Caco-2 (cell line): ENCODE measurements at regions of chr7 and their contacts with region 1.

Region 1: DNA sequence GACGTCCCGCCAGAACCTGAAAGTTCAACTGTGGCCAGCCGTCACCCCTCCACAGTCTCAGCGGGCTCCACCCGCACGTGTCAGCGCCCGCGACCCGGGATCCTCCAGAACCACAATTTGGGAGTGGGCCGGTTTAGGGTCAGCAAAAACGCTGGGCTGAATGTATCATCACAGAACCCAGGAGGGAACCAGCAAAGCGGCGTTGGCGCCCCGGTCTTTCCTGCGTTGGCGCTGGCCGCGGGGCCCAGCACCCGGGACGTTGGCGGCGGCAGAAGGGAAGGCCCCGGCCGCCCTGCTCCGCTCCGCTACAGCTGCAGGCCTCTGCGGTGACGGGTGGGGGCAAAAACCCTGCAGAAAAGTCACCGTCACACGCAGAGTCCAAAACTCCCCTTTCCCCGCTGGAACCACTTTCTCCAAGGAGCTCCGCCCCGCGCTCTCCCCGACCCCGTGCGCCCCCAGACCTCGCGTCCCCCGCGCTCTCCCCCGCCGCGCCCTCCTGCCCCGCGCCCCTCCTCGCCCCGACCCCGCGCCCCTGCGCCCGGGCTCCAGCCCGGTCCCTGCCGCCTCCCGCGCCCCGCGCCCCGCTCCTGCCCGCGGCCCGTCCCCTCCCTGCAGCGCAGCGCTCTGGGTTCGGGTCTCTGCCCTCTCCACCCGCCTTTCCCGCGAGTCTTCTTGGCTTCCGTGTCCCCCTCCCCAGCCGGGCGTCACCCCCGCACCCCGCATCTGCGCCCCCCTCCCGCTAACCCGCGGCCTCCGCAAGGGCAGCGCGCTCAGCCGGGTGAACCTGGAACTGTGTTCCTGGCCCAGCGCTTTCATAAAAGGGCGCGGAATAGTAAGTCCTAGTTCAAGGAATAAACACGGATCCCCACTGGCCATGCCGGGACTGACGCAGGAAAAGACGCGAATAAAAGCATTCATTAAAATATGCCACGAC is 24.0 kb upstream of the RNF32 start:
- DNase-seq: peak in 1 of 2 experiments; percentile 30
- H3K4me3 ChIP-seq: peak overlapping the region; percentile 45
- H3K4me3 Mint-ChIP-seq: peak overlapping the region; percentile 75
- H3K27ac Mint-ChIP-seq: peak overlapping the region; percentile 79
- H3K4me1 ChIP-seq: peaks cover 74% of the 10 kb centered on the region
- H3K4me1 Mint-ChIP-seq: peaks cover 58% of the 10 kb centered on the region
- H3K27me3 ChIP-seq: no peaks in the 10 kb centered on the region
- H3K27me3 Mint-ChIP-seq: no peaks in the 10 kb centered on the region
- CTCF ChIP-seq: no peak

Region 2: DNA sequence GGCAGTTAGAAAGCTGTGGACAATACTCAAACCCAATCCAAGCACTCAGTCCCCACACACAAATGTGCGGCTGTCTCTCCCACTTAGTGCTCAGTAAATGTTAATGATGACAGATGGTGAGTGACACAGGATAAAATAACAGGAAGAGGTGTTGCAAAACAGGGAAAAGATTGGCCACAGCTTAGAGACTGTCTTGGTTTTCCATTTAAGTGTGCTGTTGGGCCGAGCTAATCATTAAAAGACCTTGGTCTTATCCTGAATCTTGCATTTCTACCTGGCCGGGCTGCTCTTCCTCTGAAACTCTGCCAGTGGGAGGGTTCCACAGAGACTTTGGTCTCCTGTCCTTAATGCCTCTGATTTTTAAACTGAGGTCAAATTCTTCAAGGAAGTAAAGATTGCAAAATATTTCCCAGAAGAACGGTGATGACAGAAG is 89.1 kb before region 1 on chr7:
- CTCF ChIA-PET with region 1: no interaction called
- POLR2A ChIA-PET with region 1: interaction called, 3 read pairs
- intact Hi-C with region 1: loop called (anchors 1 kb)
- DNase-seq: peak; percentile 68 to 82
- H3K4me3 ChIP-seq: no peak overlapping the region
- H3K4me3 Mint-ChIP-seq: no peak overlapping the region
- H3K27ac Mint-ChIP-seq: peak overlapping the region; percentile 45
- H3K4me1 ChIP-seq: peaks cover 39% of the 10 kb centered on the region
- H3K4me1 Mint-ChIP-seq: peaks cover 18% of the 10 kb centered on the region
- H3K27me3 ChIP-seq: no peaks in the 10 kb centered on the region
- H3K27me3 Mint-ChIP-seq: no peaks in the 10 kb centered on the region
- CTCF ChIP-seq: no peak

Region 3: GRCh38 chr7:156560075-156560474 is 56.5 kb before region 1 on chr7:
- CTCF ChIA-PET with region 1: interaction called, 3 read pairs
- POLR2A ChIA-PET with region 1: interaction called, 5 read pairs
- intact Hi-C with region 1: loop called (anchors 1 kb)
- DNase-seq: peak; percentile 40 to 44
- H3K4me3 ChIP-seq: no peak overlapping the region
- H3K4me3 Mint-ChIP-seq: no peak overlapping the region
- H3K27ac Mint-ChIP-seq: no peak overlapping the region
- H3K4me1 ChIP-seq: no peaks in the 10 kb centered on the region
- H3K4me1 Mint-ChIP-seq: no peaks in the 10 kb centered on the region
- H3K27me3 ChIP-seq: no peaks in the 10 kb centered on the region
- H3K27me3 Mint-ChIP-seq: no peaks in the 10 kb centered on the region
- CTCF ChIP-seq: peak; percentile 52 to 59

Region 4: GRCh38 chr7:156640257-156640948 is 23.9 kb after region 1 on chr7 and contains the start of gene RNF32:
- CTCF ChIA-PET with region 1: no interaction called
- POLR2A ChIA-PET with region 1: interaction called, 22 read pairs
- intact Hi-C with region 1: loop called (anchors 1 kb)
- DNase-seq: peak; percentile 99
- H3K4me3 ChIP-seq: peak within 1 kb of the TSS; percentile 72
- H3K4me3 Mint-ChIP-seq: peak within 1 kb of the TSS; percentile 99
- H3K27ac Mint-ChIP-seq: peak within 1 kb of the TSS; percentile 100
- H3K4me1 ChIP-seq: peaks cover 19% of the 10 kb centered on the region
- H3K4me1 Mint-ChIP-seq: peaks cover 29% of the 10 kb centered on the region
- H3K27me3 ChIP-seq: no peaks in the 10 kb centered on the region
- H3K27me3 Mint-ChIP-seq: no peaks in the 10 kb centered on the region
- CTCF ChIP-seq: no peak
- total RNA-seq, gene RNF32: 24.1 and 26.0 TPM in 2 replicates

Region 5: GRCh38 chr7:156747691-156748090 is 131.2 kb after region 1 on chr7:
- CTCF ChIA-PET with region 1: no interaction called
- POLR2A ChIA-PET with region 1: no interaction called
- intact Hi-C with region 1: no loop called
- DNase-seq: peak in 1 of 2 experiments; percentile 35
- H3K4me3 ChIP-seq: no peak overlapping the region
- H3K4me3 Mint-ChIP-seq: no peak overlapping the region
- H3K27ac Mint-ChIP-seq: no peak overlapping the region
- H3K4me1 ChIP-seq: peaks cover 45% of the 10 kb centered on the region
- H3K4me1 Mint-ChIP-seq: peaks cover 12% of the 10 kb centered on the region
- H3K27me3 ChIP-seq: no peaks in the 10 kb centered on the region
- H3K27me3 Mint-ChIP-seq: no peaks in the 10 kb centered on the region
- CTCF ChIP-seq: no peak

Region 6: DNA sequence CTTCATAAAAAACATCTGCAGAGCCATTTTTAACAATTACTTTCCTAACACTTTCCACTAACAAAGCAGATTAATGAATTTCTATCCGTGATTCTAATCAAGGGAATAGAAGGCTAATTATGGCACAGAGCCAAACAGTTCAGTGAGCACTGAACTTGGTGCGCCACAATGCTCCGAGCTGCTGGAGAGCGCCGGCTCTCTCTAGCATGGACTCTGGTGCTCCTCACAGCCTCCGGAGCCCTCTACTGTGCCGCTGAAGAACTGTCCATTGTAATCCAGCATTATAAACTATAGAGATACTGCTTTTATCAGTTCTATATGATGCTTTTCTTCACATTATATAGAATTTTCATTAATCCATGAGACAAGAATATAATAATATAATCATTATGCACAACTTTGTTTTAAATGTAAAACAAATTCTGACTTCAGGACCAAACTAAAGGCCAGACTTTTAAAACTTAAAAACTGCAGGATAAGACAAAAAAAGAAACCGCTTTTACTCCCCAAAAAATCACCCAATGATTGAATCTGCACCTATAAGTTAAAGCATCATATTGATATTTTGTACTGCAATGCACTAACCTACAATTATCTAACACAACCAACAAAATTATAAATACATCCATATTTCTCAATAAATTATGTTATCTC is 147.6 kb after region 1 on chr7:
- CTCF ChIA-PET with region 1: interaction called, 3 read pairs
- POLR2A ChIA-PET with region 1: no interaction called
- intact Hi-C with region 1: loop called (anchors 1 kb)
- DNase-seq: peak; percentile 73 to 78
- H3K4me3 ChIP-seq: no peak overlapping the region
- H3K4me3 Mint-ChIP-seq: no peak overlapping the region
- H3K27ac Mint-ChIP-seq: no peak overlapping the region
- H3K4me1 ChIP-seq: peaks cover 20% of the 10 kb centered on the region
- H3K4me1 Mint-ChIP-seq: peaks cover 30% of the 10 kb centered on the region
- H3K27me3 ChIP-seq: no peaks in the 10 kb centered on the region
- H3K27me3 Mint-ChIP-seq: no peaks in the 10 kb centered on the region
- CTCF ChIP-seq: peak; percentile 68 to 79